Activated CD4-positive, alpha-beta T cell treated with anti-CD3 and anti-CD28 coated beads for 36 hours (primary cell): ENCODE measurements at regions of chr3 and their contacts with region 1.

Region 1: GRCh38 chr3:71087143-71088018 is 496.1 kb downstream of the FOXP1 start:
- DNase-seq: peak; percentile 61
- ATAC-seq: peak; percentile 74
- H3K4me3 Mint-ChIP-seq: peak overlapping the region; percentile 52
- H3K27ac Mint-ChIP-seq: peak overlapping the region; percentile 93
- H3K4me1 Mint-ChIP-seq: peaks cover 94% of the 10 kb centered on the region
- H3K27me3 Mint-ChIP-seq: no peaks in the 10 kb centered on the region

Region 2: DNA sequence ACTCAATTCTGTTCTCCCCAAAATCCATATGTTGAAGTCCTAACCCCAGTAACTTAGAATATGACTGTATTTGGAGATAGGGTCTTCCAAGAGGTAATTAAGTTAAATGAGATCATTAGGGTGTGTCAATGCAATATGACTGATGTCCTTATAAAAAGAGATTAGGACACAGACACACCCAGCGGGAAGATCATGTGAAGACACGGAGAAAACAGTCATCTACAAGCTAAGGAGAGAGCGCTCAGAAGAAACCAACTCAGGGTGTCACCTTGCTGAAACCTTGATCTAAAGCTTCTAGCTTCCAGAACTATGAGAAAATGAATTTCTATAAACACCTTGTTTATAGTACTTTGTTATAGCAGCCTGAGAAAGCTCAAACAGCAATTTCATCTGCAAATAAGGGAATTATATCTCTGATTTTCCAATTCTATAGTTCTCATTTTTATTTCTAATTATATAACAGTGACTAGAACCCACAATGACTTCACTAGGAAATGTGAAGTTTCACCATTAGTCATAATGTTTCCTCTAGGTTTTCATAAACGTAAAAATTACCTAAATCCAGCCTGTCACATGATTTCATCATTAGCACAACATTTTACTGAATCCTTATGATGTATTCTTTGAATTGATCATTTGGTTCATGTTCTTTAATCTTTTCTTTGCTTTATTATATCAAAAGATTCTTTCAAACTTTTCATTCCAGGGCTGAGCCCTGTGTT is 315.8 kb before region 1 on chr3:
- CTCF ChIA-PET with region 1: no interaction called
- POLR2A ChIA-PET with region 1: no interaction called
- intact Hi-C with region 1: loop called in 1 of 2 experiments (anchors 5 kb)
- DNase-seq: no peak
- ATAC-seq: peak; percentile 70
- H3K4me3 Mint-ChIP-seq: no peak overlapping the region
- H3K27ac Mint-ChIP-seq: no peak overlapping the region
- H3K4me1 Mint-ChIP-seq: peaks cover 12% of the 10 kb centered on the region
- H3K27me3 Mint-ChIP-seq: peaks cover 43% of the 10 kb centered on the region

Region 3: GRCh38 chr3:71069797-71070196 is 17.6 kb before region 1 on chr3:
- CTCF ChIA-PET with region 1: interaction called, 6 read pairs
- POLR2A ChIA-PET with region 1: interaction called, 7 read pairs
- intact Hi-C with region 1: loop called (anchors 1 to 2 kb)
- DNase-seq: peak; percentile 84
- ATAC-seq: peak; percentile 42
- H3K4me3 Mint-ChIP-seq: no peak overlapping the region
- H3K27ac Mint-ChIP-seq: peak overlapping the region; percentile 67
- H3K4me1 Mint-ChIP-seq: peaks cover 85% of the 10 kb centered on the region
- H3K27me3 Mint-ChIP-seq: no peaks in the 10 kb centered on the region

Region 4: GRCh38 chr3:71130471-71131374 is 43.3 kb after region 1 on chr3:
- CTCF ChIA-PET with region 1: interaction called, 5 read pairs
- POLR2A ChIA-PET with region 1: interaction called, 3 read pairs
- intact Hi-C with region 1: loop called (anchors 1 kb)
- DNase-seq: peak; percentile 82
- ATAC-seq: peak; percentile 61
- H3K4me3 Mint-ChIP-seq: peak overlapping the region; percentile 90
- H3K27ac Mint-ChIP-seq: peak overlapping the region; percentile 99
- H3K4me1 Mint-ChIP-seq: peaks cover 71% of the 10 kb centered on the region
- H3K27me3 Mint-ChIP-seq: no peaks in the 10 kb centered on the region

Region 5: DNA sequence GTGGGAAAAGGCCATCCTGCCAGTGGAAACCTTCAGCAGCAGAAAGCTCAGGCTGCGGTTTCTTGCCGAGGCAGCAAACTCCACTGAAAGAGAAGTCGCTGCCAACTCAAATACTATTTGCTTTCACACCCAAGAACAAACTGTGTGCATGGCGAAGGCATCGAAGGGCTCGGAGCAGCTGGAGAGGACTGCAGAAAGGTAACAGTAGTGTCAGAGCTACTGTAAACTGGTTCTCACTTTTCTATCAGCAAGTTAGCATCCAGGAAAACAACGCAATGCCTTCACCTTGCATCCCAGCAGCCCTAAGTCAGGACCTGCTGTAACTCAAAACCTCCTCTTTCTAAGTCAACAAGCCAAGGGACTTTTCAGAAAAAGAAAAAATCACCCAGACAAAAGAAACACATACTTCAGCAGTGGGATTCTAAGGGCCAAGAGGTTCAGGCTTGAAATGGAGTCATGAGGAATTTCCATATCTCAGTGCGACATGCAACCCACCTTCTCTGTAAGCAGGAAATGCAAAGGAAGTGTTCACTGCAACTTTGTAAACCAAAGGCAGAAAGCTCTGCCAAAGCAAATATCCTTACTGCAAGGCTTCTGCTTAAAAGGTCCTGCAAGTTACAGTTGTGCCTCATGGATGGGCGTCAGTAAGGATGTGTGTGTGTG is 302.7 kb after region 1 on chr3:
- CTCF ChIA-PET with region 1: no interaction called
- POLR2A ChIA-PET with region 1: no interaction called
- intact Hi-C with region 1: loop called in 1 of 2 experiments (anchors 1 kb)
- DNase-seq: peak; percentile 52
- ATAC-seq: peak; percentile 18
- H3K4me3 Mint-ChIP-seq: peak overlapping the region; percentile 52
- H3K27ac Mint-ChIP-seq: peak overlapping the region; percentile 69
- H3K4me1 Mint-ChIP-seq: peaks cover 78% of the 10 kb centered on the region
- H3K27me3 Mint-ChIP-seq: no peaks in the 10 kb centered on the region